ENCODE measurements at regions of chr1 and their contacts with region 1.

Region 1: GRCh38 chr1:245807306-245807705 is 652.5 kb downstream of the KIF26B start:
- DNase-seq: peak; percentile 75
- H3K4me3 ChIP-seq: peak overlapping the region; percentile 50
- H3K27ac ChIP-seq: peak overlapping the region; percentile 90
- H3K4me1 ChIP-seq: peaks cover 69% of the 10 kb centered on the region
- CTCF ChIP-seq: no peak

Region 2: DNA sequence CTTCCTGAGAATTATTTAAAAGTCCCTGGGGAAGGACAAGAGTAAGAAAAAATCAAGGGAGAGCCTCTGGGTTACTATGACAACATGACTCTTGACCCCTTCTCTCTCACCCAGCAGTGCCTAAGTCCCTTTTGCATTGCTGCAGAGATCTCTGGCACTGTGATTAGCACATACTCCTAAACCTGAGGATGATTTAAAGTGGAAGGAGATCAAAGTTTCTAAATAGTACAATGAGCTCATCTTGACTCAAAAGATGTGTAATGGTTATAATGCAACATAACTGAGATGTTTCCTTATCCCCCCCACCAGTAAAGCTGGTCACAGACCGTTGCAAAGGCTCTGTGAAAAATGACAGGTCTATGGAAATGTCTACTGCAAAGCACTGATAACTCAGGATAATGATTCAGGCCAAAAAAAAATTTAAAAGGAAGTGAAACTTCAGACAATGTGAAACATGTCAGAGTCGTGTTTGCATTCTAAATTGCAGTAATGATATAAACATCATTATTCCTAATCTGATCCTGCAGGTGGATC is 133.4 kb before region 1 on chr1:
- CTCF ChIA-PET with region 1: interaction called, 4 read pairs
- POLR2A ChIA-PET with region 1: no interaction called
- intact Hi-C with region 1: loop called (anchors 2 kb)
- DNase-seq: peak; percentile 83
- H3K4me3 ChIP-seq: peak overlapping the region; percentile 31
- H3K27ac ChIP-seq: peak overlapping the region; percentile 72
- H3K4me1 ChIP-seq: peaks cover 33% of the 10 kb centered on the region
- CTCF ChIP-seq: no peak; the same call in 1 of the 2 replicates

Region 3: DNA sequence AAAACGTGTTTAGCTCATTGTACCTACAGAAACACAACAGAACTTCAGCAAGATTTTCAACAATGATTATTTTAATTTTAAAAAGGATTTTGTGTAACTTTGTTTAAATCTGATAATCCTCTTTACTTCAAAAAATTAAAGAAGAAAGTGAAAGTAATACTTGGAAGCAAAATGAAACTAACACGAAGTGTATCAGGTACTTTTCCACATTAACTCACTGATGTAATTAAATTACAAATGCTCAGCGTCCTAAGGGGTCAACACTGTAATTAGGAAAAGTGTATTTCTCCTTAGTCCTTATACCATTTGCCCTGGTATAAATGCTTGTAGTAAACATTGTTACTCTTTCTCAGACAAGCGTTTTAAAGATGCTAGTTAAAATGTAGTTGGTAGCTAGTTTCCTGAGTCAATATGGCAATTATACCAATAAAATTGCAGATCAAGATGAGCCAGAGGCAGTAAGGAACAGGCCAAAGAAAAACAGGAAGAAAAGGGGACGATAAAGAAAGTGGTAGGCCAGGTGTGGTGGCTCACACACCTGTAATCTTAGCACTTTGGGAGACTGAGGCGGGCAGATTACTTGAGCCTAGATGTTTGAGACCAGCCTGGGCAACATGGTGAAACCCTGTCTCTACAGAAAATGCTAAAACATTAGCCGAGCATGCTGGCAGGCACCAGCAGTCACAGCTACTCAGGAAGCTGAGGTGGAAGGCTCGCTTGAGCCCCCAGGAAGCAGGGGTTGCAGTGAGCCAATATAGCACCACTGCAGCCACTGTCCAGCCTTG is 146.8 kb after region 1 on chr1:
- CTCF ChIA-PET with region 1: no interaction called
- POLR2A ChIA-PET with region 1: interaction called, 7 read pairs
- intact Hi-C with region 1: loop called (anchors 1 kb)
- DNase-seq: peak; percentile 71
- H3K4me3 ChIP-seq: peak overlapping the region; percentile 60
- H3K27ac ChIP-seq: peak overlapping the region; percentile 67
- H3K4me1 ChIP-seq: peaks cover 39% of the 10 kb centered on the region
- CTCF ChIP-seq: no peak